Naive thymus-derived CD4-positive, alpha-beta T cell (primary cell): ENCODE measurements at regions of chr2 and their contacts with region 1.

Region 1: GRCh38 chr2:119841550-119841949 is 81.8 kb downstream of the PTPN4 start:
- DNase-seq: no peak
- ATAC-seq: no peak
- H3K4me3 ChIP-seq: no peak overlapping the region
- H3K4me3 Mint-ChIP-seq: peak overlapping the region in 4 of 10 donors; percentile 6 to 41 (median 26)
- H3K27ac ChIP-seq: no peak overlapping the region
- H3K27ac Mint-ChIP-seq: peak overlapping the region in 8 of 9 donors; percentile 19 to 86 (median 38)
- H3K4me1 ChIP-seq: peaks cover 0 to 5% of the 10 kb centered on the region in 2 donors
- H3K4me1 Mint-ChIP-seq: peaks cover 13 to 70% (median 60%) of the 10 kb centered on the region in 7 donors
- H3K27me3 ChIP-seq: no peaks in the 10 kb centered on the region
- H3K27me3 Mint-ChIP-seq: no peaks in the 10 kb centered on the region

Region 2: GRCh38 chr2:119853777-119854399 is 12.3 kb after region 1 on chr2:
- CTCF ChIA-PET with region 1: no interaction called
- POLR2A ChIA-PET with region 1: interaction called, 3 read pairs
- intact Hi-C with region 1: loop called in 1 of 2 experiments (anchors 2 kb)
- DNase-seq: no peak
- ATAC-seq: no peak
- H3K4me3 ChIP-seq: no peak overlapping the region
- H3K4me3 Mint-ChIP-seq: no peak overlapping the region
- H3K27ac ChIP-seq: no peak overlapping the region
- H3K27ac Mint-ChIP-seq: no peak overlapping the region
- H3K4me1 ChIP-seq: peaks cover 5 to 6% of the 10 kb centered on the region in 2 donors
- H3K4me1 Mint-ChIP-seq: peaks cover 12 to 70% (median 59%) of the 10 kb centered on the region in 7 donors
- H3K27me3 ChIP-seq: no peaks in the 10 kb centered on the region
- H3K27me3 Mint-ChIP-seq: no peaks in the 10 kb centered on the region

Region 3: GRCh38 chr2:119950966-119951365 is 109.4 kb after region 1 on chr2:
- CTCF ChIA-PET with region 1: no interaction called
- POLR2A ChIA-PET with region 1: no interaction called
- intact Hi-C with region 1: no loop called
- DNase-seq: no peak
- ATAC-seq: no peak
- H3K4me3 ChIP-seq: no peak overlapping the region
- H3K4me3 Mint-ChIP-seq: no peak overlapping the region
- H3K27ac ChIP-seq: no peak overlapping the region
- H3K27ac Mint-ChIP-seq: peak overlapping the region in 7 of 9 donors; percentile 19 to 69 (median 60)
- H3K4me1 ChIP-seq: no peaks in the 10 kb centered on the region
- H3K4me1 Mint-ChIP-seq: peaks cover 4 to 21% (median 14%) of the 10 kb centered on the region in 7 donors
- H3K27me3 ChIP-seq: no peaks in the 10 kb centered on the region
- H3K27me3 Mint-ChIP-seq: no peaks in the 10 kb centered on the region